Naive thymus-derived CD4-positive, alpha-beta T cell (primary cell): ENCODE measurements at regions of chr7 and their contacts with region 1.

Region 1: DNA sequence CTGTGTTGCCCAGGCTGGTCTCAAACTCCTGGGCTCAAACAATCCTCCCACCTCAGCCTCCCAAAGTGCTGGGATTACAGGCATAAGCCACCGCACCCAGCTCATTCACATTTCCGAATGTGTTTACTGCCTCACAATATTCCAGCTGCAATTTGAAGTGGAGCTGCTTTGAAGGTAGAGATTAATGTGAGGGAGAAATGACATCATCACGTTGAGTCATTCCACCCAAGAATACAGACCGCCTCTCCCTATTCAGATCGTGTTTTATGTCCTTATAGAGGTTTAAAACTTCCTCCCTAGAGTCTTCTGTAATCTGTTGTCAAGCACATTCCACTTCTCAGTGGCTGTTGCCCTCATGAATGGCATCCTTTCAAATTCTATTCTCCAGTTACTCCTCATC is 100.4 kb upstream of the PDGFA start:
- DNase-seq: no peak
- ATAC-seq: no peak
- H3K4me3 ChIP-seq: no peak overlapping the region
- H3K4me3 Mint-ChIP-seq: peak overlapping the region in 7 of 10 donors; percentile 33 to 93 (median 79)
- H3K27ac ChIP-seq: peak overlapping the region; percentile 91
- H3K27ac Mint-ChIP-seq: peak overlapping the region; percentile 96 to 100 (median 99)
- H3K4me1 ChIP-seq: peaks cover 39 to 42% of the 10 kb centered on the region in 2 donors
- H3K4me1 Mint-ChIP-seq: peaks cover 32 to 77% (median 54%) of the 10 kb centered on the region in 7 donors
- H3K27me3 ChIP-seq: no peaks in the 10 kb centered on the region
- H3K27me3 Mint-ChIP-seq: no peaks in the 10 kb centered on the region

Region 2: GRCh38 chr7:353746-354325 is 266.2 kb before region 1 on chr7:
- CTCF ChIA-PET with region 1: no interaction called
- POLR2A ChIA-PET with region 1: interaction called, 4 read pairs
- intact Hi-C with region 1: loop called in 1 of 2 experiments (anchors 1 kb)
- DNase-seq: no peak
- ATAC-seq: no peak
- H3K4me3 ChIP-seq: no peak overlapping the region
- H3K4me3 Mint-ChIP-seq: no peak overlapping the region
- H3K27ac ChIP-seq: no peak overlapping the region
- H3K27ac Mint-ChIP-seq: no peak overlapping the region
- H3K4me1 ChIP-seq: peaks cover 10 to 11% of the 10 kb centered on the region in 2 donors
- H3K4me1 Mint-ChIP-seq: peaks cover 10 to 27% (median 21%) of the 10 kb centered on the region in 7 donors
- H3K27me3 ChIP-seq: no peaks in the 10 kb centered on the region
- H3K27me3 Mint-ChIP-seq: peaks cover 0 to 3% (median 0%) of the 10 kb centered on the region in 5 donors

Region 3: DNA sequence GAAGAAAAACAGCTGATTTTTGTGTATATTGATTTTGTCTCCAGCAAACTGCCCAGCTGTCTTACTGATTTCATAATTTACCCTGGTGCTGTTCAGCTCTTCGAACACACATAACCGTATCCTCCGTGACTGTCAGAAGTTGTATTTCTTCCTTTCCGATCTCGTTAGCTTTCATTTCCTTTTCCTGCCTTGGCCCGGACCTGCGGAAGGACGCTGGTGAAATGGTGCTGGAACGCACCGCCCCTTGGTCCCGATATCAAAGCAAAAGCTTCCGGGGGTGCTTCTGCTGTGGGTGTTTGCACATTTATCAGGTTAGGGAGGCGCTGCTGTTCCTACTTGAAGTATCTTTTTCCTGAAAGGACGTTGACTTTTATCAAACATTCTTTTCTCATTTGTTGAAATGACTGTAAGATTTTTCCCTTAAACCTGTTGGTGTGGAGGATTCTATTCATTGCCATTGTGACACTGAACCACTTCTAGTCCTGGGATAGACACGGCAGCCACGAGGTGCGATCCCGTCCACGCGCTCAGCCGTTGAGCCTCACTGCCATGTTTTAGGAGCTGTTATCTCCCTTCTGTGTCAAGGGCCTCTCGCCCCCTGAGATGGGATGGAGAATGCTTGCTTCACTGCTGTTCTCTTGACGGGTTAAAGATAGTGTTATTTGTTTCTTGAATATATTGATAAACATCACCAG is 257.5 kb before region 1 on chr7:
- CTCF ChIA-PET with region 1: no interaction called
- POLR2A ChIA-PET with region 1: interaction called, 3 read pairs
- intact Hi-C with region 1: loop called in 1 of 2 experiments (anchors 5 kb)
- DNase-seq: peak in 7 of 9 donors; percentile 57 to 70 (median 61)
- ATAC-seq: peak; percentile 68
- H3K4me3 ChIP-seq: peak overlapping the region; percentile 38
- H3K4me3 Mint-ChIP-seq: peak overlapping the region; percentile 71 to 85 (median 76)
- H3K27ac ChIP-seq: peak overlapping the region; percentile 68
- H3K27ac Mint-ChIP-seq: peak overlapping the region; percentile 86 to 98 (median 94)
- H3K4me1 ChIP-seq: peaks cover 29 to 72% of the 10 kb centered on the region in 2 donors
- H3K4me1 Mint-ChIP-seq: peaks cover 52 to 89% (median 73%) of the 10 kb centered on the region in 7 donors
- H3K27me3 ChIP-seq: no peaks in the 10 kb centered on the region
- H3K27me3 Mint-ChIP-seq: peaks cover 0 to 5% (median 0%) of the 10 kb centered on the region in 5 donors

Region 4: DNA sequence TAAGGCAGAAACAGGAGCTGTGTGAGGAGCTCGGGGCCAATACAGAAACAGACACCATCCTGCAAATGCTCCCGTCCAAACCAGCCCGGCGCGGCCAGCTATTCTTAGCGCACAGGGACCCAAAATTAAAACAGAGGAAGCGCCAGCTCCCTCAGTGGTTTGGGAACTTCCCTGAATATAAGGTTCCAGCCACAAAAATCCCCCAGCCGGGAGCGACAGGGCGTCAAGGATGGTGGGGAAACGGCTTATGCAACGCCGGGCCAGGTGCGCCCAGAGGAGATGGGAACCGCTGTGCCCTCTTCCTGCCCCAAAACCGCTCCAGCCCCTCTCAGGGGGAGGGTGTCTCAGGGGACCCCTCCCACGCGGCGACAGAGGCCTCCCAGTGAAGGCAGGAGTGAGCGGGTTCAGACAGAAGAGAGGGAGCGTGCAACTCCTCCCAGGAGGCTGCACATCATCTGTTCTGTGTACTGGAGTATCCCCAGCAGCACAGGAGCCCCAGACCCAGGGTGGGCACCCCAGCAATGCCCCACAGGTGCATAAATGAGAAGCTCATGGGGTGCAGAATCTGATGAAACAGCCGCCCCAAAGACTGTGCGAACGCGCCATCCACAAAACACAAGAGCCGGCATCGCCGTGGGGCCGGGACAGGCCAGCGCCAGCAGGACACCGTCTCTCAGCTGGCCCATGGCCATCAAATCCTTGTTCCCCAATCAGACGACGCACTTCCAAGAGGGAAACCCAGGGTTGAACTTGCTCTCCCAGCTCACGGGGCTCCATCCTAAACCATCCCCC is 26.5 kb before region 1 on chr7:
- CTCF ChIA-PET with region 1: no interaction called
- POLR2A ChIA-PET with region 1: no interaction called
- intact Hi-C with region 1: no loop called
- DNase-seq: peak in 1 of 9 donors; percentile 50
- ATAC-seq: peak; percentile 12
- H3K4me3 ChIP-seq: no peak overlapping the region
- H3K4me3 Mint-ChIP-seq: peak overlapping the region in 5 of 10 donors; percentile 25 to 50 (median 34)
- H3K27ac ChIP-seq: no peak overlapping the region
- H3K27ac Mint-ChIP-seq: peak overlapping the region in 5 of 9 donors; percentile 11 to 45 (median 23)
- H3K4me1 ChIP-seq: peaks cover 0 to 11% of the 10 kb centered on the region in 2 donors
- H3K4me1 Mint-ChIP-seq: peaks cover 9 to 35% (median 18%) of the 10 kb centered on the region in 7 donors
- H3K27me3 ChIP-seq: no peaks in the 10 kb centered on the region
- H3K27me3 Mint-ChIP-seq: no peaks in the 10 kb centered on the region

Region 5: GRCh38 chr7:641269-641671 is 21.2 kb after region 1 on chr7:
- CTCF ChIA-PET with region 1: no interaction called
- POLR2A ChIA-PET with region 1: interaction called, 6 read pairs
- intact Hi-C with region 1: loop called in 1 of 2 experiments (anchors 2 kb)
- DNase-seq: no peak
- ATAC-seq: no peak
- H3K4me3 ChIP-seq: no peak overlapping the region
- H3K4me3 Mint-ChIP-seq: no peak overlapping the region
- H3K27ac ChIP-seq: no peak overlapping the region
- H3K27ac Mint-ChIP-seq: no peak overlapping the region
- H3K4me1 ChIP-seq: no peaks in the 10 kb centered on the region
- H3K4me1 Mint-ChIP-seq: peaks cover 9 to 33% (median 23%) of the 10 kb centered on the region in 7 donors
- H3K27me3 ChIP-seq: no peaks in the 10 kb centered on the region
- H3K27me3 Mint-ChIP-seq: no peaks in the 10 kb centered on the region

Region 6: GRCh38 chr7:668139-668931 is 48.3 kb after region 1 on chr7:
- CTCF ChIA-PET with region 1: no interaction called
- POLR2A ChIA-PET with region 1: interaction called, 17 read pairs
- intact Hi-C with region 1: loop called in 1 of 2 experiments (anchors 2 kb)
- DNase-seq: peak in 6 of 9 donors; percentile 13 to 38 (median 32)
- ATAC-seq: no peak
- H3K4me3 ChIP-seq: peak overlapping the region; percentile 28
- H3K4me3 Mint-ChIP-seq: peak overlapping the region in 1 of 10 donors; percentile 6
- H3K27ac ChIP-seq: peak overlapping the region; percentile 61
- H3K27ac Mint-ChIP-seq: no peak overlapping the region
- H3K4me1 ChIP-seq: peaks cover 0 to 9% of the 10 kb centered on the region in 2 donors
- H3K4me1 Mint-ChIP-seq: peaks cover 0 to 6% (median 0%) of the 10 kb centered on the region in 7 donors
- H3K27me3 ChIP-seq: no peaks in the 10 kb centered on the region
- H3K27me3 Mint-ChIP-seq: no peaks in the 10 kb centered on the region